ENCODE measurements at regions of chr2 and their contacts with region 1.

Region 1: GRCh38 chr2:9951272-9951972 is at the start of gene GRHL1:
- DNase-seq: peak; percentile 89 to 96 (median 93)
- H3K4me3 ChIP-seq: peak within 1 kb of the TSS; percentile 58
- H3K27ac ChIP-seq: no peak within 1 kb of the TSS
- H3K4me1 ChIP-seq: no peaks in the 10 kb centered on the region
- H3K27me3 ChIP-seq: no peaks in the 10 kb centered on the region
- CTCF ChIP-seq: no peak
- EP300 ChIP-seq: no peak
- POLR2A ChIP-seq: no peak
- total RNA-seq, gene GRHL1: 0.18 to 2.4 (median 0.78) TPM in 6 of 7 donors, not detected in the other

Region 2: DNA sequence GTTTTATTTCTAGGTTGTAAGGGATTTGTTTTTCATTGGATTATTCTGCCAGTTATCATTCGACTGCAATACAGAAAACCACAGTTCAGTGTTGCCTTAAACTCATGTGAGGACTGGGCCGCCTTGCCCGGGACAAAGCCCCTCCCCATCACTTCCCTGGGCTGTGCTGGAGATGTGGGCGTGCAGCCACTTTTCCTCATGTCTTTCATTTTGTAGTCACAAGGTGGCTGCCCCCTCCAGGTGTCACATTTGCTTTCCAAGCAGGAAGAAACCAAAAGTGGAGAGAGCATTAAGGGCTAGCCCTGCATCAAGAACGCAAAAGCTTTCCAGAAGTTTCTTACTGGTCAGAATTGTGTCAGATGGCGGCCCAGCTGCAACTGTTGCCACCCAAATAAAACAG is 1762.1 kb before region 1 on chr2:
- intact Hi-C with region 1: no loop called
- DNase-seq: no peak
- H3K4me3 ChIP-seq: no peak overlapping the region
- H3K27ac ChIP-seq: no peak overlapping the region
- H3K4me1 ChIP-seq: no peaks in the 10 kb centered on the region
- H3K27me3 ChIP-seq: no peaks in the 10 kb centered on the region
- CTCF ChIP-seq: no peak
- EP300 ChIP-seq: no peak
- POLR2A ChIP-seq: no peak

Region 3: GRCh38 chr2:9256570-9257043 is 694.8 kb before region 1 on chr2:
- intact Hi-C with region 1: loop called in 1 of 4 experiments (anchors 5 kb)
- DNase-seq: no peak
- H3K4me3 ChIP-seq: no peak overlapping the region
- H3K27ac ChIP-seq: no peak overlapping the region
- H3K4me1 ChIP-seq: peaks cover 25% of the 10 kb centered on the region
- H3K27me3 ChIP-seq: no peaks in the 10 kb centered on the region
- CTCF ChIP-seq: no peak
- EP300 ChIP-seq: no peak
- POLR2A ChIP-seq: no peak